ENCODE measurements at regions of chr9 and their contacts with region 1.

Region 1: DNA sequence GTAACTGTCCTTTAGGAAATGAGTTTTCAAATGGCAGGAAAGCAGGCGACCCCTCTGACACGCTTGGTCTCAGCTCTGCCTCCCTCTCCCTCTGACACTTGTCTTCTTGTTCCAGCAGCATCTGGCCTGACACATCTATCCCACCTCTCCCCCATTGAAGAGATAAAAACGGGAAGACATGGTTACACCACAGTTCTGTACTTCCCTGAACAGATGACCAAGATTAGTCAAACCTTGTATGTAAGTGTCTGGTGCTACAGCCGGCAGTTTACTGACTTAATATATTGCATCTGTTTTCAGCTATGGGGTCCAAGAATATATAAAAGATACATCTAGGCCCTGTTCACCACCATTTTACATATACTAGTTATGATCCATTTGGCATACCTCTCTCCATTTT is 29.6 kb upstream of the MLLT3 start:
- DNase-seq: no peak
- H3K4me3 ChIP-seq: no peak overlapping the region
- H3K4me3 Mint-ChIP-seq: no peak overlapping the region
- H3K27ac Mint-ChIP-seq: no peak overlapping the region
- H3K4me1 ChIP-seq: peaks cover 7% of the 10 kb centered on the region
- H3K4me1 Mint-ChIP-seq: peaks cover 7% of the 10 kb centered on the region
- H3K27me3 ChIP-seq: no peaks in the 10 kb centered on the region
- H3K27me3 Mint-ChIP-seq: no peaks in the 10 kb centered on the region
- CTCF ChIP-seq: no peak

Region 2: GRCh38 chr9:20684035-20684872 is 32.3 kb after region 1 on chr9 and contains the start of gene FOCAD:
- CTCF ChIA-PET with region 1: no interaction called
- POLR2A ChIA-PET with region 1: no interaction called
- intact Hi-C with region 1: loop called (anchors 2 kb)
- DNase-seq: peak; percentile 93 to 96
- H3K4me3 ChIP-seq: peak within 1 kb of the TSS; percentile 66
- H3K4me3 Mint-ChIP-seq: peak within 1 kb of the TSS; percentile 74
- H3K27ac Mint-ChIP-seq: peak within 1 kb of the TSS; percentile 79
- H3K4me1 ChIP-seq: peaks cover 16% of the 10 kb centered on the region
- H3K4me1 Mint-ChIP-seq: peaks cover 7% of the 10 kb centered on the region
- H3K27me3 ChIP-seq: no peaks in the 10 kb centered on the region
- H3K27me3 Mint-ChIP-seq: no peaks in the 10 kb centered on the region
- CTCF ChIP-seq: no peak
- total RNA-seq, gene FOCAD: 20.4 TPM in 2 replicates

Region 3: DNA sequence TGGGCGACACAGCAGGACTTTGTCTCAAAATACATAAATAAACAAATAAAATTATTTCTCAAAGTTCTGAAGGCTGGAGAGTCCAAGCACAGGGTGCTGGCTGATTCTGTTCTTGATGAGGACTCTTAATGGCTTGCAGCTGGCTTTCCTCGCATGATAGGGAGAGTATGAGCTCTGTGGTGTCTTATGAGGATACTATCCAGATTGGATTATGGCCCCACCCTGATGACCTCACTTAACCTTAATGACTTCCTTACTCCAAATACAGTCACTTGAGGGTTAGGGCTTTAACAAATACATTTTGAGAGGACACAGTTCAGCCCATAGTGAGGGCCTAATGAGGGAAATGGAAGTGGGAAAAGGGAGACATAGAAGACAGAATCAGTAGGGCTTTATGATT is 119.8 kb after region 1 on chr9:
- CTCF ChIA-PET with region 1: no interaction called
- POLR2A ChIA-PET with region 1: no interaction called
- intact Hi-C with region 1: no loop called
- DNase-seq: no peak
- H3K4me3 ChIP-seq: no peak overlapping the region
- H3K4me3 Mint-ChIP-seq: no peak overlapping the region
- H3K27ac Mint-ChIP-seq: no peak overlapping the region
- H3K4me1 ChIP-seq: no peaks in the 10 kb centered on the region
- H3K4me1 Mint-ChIP-seq: no peaks in the 10 kb centered on the region
- H3K27me3 ChIP-seq: no peaks in the 10 kb centered on the region
- H3K27me3 Mint-ChIP-seq: no peaks in the 10 kb centered on the region
- CTCF ChIP-seq: no peak

Measured in Caco-2 (cell line).